ENCODE measurements at regions of chr11 and their contacts with region 1.

Region 1: DNA sequence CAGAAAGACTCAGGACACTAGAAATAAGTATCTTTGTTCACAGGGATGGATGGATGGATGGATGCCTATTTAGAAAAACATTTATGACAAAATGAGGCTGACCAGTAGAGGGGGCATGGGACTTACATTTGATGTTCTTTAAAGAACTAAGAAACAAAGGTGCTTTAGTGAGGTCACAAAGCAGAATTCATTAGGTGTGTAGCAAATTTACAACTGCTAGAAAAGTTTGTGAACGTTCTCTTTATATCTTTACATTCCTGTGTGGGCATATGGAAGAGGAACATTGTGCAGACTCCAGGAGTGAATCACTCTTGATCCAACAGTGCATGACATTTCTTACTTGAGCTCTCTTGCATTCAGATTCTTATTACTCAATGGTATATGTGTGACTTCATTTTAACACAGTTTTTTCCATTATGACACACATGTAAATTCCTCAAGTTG is 15.8 kb upstream of the SIK2 start:
- DNase-seq: no peak

Region 2: GRCh38 chr11:110513846-110514437 is 1072.5 kb before region 1 on chr11:
- intact Hi-C with region 1: loop called in 1 of 2 experiments (anchors 5 kb)
- DNase-seq: no peak

Region 3: DNA sequence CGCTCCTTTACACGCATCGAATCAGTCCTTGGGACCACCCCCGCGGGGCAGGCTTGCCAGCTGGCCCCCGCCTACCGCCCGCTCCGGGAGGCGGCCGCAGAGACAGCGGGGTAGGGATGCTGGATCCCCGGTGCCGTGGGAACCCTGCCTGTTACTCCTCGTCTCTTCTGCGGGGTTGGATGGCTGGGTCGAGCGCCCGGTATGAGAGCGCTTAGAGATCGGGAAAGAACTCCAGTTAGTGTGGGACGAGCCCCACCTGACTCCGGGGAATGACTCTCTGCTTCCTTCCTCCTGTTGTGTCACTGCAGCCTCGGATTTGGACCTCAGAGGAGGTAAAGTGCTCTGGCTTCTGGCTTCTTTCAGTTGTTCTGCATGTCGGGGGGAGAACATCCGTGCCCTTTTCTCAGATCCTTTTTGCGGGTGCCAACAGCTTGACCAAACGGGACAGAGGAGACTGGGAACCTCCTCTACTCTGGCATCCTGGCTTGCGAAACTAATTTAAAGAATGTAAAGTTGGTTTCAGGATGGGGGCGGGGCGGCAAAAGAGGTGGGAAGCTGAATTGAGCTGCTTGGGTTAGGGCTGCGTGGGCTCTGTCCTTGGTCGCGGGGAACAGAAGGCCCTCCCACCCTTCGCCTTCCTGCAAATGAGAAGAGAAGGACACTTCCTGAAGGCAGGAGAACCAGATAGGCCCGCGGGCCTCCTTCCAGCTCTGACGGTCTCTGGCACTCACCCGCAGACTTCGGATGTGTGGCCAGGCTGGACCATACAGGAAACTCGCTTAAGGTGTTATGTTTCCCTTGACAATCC is 45.0 kb before region 1 on chr11:
- intact Hi-C with region 1: no loop called
- DNase-seq: no peak

Measured in posterior vena cava (tissue), 2 donors.